Mammary epithelial cell (primary cell): ENCODE measurements at regions of chr2 and their contacts with region 1.

Region 1: GRCh38 chr2:1653956-1654695 is 90.2 kb downstream of the PXDN start:
- DNase-seq: no peak
- H3K4me3 ChIP-seq: no peak overlapping the region
- H3K27ac ChIP-seq: peak overlapping the region; percentile 60
- H3K4me1 ChIP-seq: peaks cover 31% of the 10 kb centered on the region
- H3K27me3 ChIP-seq: no peaks in the 10 kb centered on the region
- CTCF ChIP-seq: no peak

Region 2: GRCh38 chr2:1591978-1592907 is 61.9 kb before region 1 on chr2:
- CTCF ChIA-PET with region 1: no interaction called
- dilution Hi-C with region 1: no loop called
- in situ Hi-C with region 1: no loop called
- intact Hi-C with region 1: loop called (anchors 5 kb)
- DNase-seq: peak; percentile 31
- H3K4me3 ChIP-seq: no peak overlapping the region
- H3K27ac ChIP-seq: no peak overlapping the region
- H3K4me1 ChIP-seq: peaks cover 41% of the 10 kb centered on the region
- H3K27me3 ChIP-seq: no peaks in the 10 kb centered on the region
- CTCF ChIP-seq: peak in 1 of 2 donors; percentile 23

Region 3: GRCh38 chr2:1625208-1625937 is 28.8 kb before region 1 on chr2:
- CTCF ChIA-PET with region 1: no interaction called
- dilution Hi-C with region 1: no loop called
- in situ Hi-C with region 1: no loop called
- intact Hi-C with region 1: loop called (anchors 2 kb)
- DNase-seq: peak; percentile 100
- H3K4me3 ChIP-seq: no peak overlapping the region
- H3K27ac ChIP-seq: peak overlapping the region; percentile 74
- H3K4me1 ChIP-seq: peaks cover 26% of the 10 kb centered on the region
- H3K27me3 ChIP-seq: no peaks in the 10 kb centered on the region
- CTCF ChIP-seq: no peak

Region 4: GRCh38 chr2:1730015-1730927 is 76.1 kb after region 1 on chr2:
- CTCF ChIA-PET with region 1: no interaction called
- dilution Hi-C with region 1: no loop called
- in situ Hi-C with region 1: no loop called
- intact Hi-C with region 1: no loop called
- DNase-seq: peak; percentile 84
- H3K4me3 ChIP-seq: no peak overlapping the region
- H3K27ac ChIP-seq: peak overlapping the region; percentile 82
- H3K4me1 ChIP-seq: peaks cover 30% of the 10 kb centered on the region
- H3K27me3 ChIP-seq: no peaks in the 10 kb centered on the region
- CTCF ChIP-seq: no peak